Panc1 (cell line): ENCODE measurements at regions of chr6 and their contacts with region 1.

Region 1: DNA sequence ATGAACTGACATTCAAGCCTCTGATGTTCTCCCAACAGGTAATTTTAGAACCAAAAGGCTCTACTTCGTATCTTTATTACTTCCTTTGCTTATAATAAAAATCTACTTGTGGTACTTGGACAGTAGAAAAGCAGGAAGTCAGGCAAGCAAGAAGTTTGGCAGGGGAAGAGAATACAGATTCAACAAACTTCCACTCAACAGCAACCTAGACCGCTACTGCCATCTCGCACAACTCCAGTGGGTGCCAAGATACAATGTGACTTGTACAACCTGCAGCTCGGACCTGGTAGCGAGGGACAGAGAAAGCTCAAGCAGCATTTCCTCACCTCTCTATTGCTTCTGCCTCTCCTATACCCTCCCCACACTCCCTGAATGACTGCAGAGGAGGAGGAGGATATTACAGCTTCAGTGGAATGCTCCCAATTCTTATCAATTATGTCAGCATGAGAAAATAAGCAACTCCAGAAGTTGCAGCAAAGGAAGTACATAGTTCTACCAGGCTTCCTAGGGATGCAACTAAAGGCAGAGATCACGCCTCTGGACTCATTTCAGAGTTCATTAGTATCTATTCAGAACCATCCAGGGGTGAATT is 76.5 kb downstream of the MBOAT1 start:
- DNase-seq: no peak
- ATAC-seq: no peak
- H3K4me3 ChIP-seq: no peak overlapping the region
- H3K27ac ChIP-seq: no peak overlapping the region
- H3K4me1 ChIP-seq: no peaks in the 10 kb centered on the region
- H3K27me3 ChIP-seq: no peaks in the 10 kb centered on the region
- CTCF ChIP-seq: no peak

Region 2: DNA sequence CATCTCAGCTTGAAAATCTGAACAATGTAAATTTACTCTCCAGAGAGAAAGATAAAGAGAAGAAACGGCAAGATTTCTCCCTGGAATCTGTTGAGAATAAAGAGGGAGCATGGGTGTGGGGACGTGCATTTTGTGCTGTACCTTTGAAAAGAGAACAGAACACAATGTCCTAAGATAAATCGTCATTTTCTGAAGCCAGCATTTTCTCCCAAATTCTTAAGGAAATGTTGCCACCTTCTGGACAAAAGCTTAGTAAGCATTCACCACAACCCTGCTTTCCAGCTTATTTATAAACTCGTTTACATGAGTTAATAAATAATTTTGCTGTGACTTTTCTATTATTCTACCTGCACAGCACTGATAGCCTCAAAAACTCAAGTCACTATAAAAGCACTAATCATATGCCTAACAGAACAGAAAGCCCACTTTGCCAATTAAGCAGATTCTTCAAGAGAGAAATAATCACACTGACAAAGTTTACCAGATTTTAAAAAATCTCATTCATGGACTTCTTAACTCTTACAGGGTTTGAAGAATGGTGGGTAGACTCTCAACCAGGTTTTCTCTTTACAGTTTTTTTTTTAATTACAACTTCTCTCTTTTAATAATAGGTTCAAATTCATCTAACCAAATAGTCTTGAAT is 79.3 kb before region 1 on chr6:
- CTCF ChIA-PET with region 1: no interaction called
- POLR2A ChIA-PET with region 1: no interaction called
- in situ Hi-C with region 1: no loop called
- intact Hi-C with region 1: no loop called
- DNase-seq: peak; percentile 8
- ATAC-seq: no peak
- H3K4me3 ChIP-seq: no peak overlapping the region
- H3K27ac ChIP-seq: no peak overlapping the region; the same call in 1 of the 2 replicates
- H3K4me1 ChIP-seq: no peaks in the 10 kb centered on the region
- H3K27me3 ChIP-seq: no peaks in the 10 kb centered on the region
- CTCF ChIP-seq: peak; percentile 65; the same call in 1 of the 2 replicates

Region 3: DNA sequence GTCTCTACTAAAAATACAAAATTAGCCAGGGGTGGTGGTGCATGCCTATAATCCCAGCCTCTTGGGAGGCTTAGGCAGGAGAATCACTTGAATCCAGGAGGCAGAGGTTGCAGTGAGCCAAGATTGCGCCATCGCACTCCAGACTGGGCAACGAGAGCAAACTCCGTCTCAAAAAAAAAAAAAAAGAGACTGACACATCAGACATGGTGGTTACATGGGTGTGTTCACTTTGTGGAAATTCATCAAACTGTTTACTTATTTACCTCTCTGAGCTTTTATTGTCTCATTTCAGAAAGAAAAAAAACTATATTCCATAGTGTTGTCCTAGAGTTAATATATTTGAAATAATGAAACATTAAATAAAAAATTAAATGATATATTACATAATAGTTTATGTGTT is 11.7 kb after region 1 on chr6:
- CTCF ChIA-PET with region 1: no interaction called
- POLR2A ChIA-PET with region 1: interaction called, 12 read pairs
- in situ Hi-C with region 1: no loop called
- intact Hi-C with region 1: no loop called
- DNase-seq: no peak
- ATAC-seq: no peak
- H3K4me3 ChIP-seq: no peak overlapping the region
- H3K27ac ChIP-seq: no peak overlapping the region
- H3K4me1 ChIP-seq: no peaks in the 10 kb centered on the region
- H3K27me3 ChIP-seq: no peaks in the 10 kb centered on the region
- CTCF ChIP-seq: no peak